ENCODE measurements at regions of chr16 and their contacts with region 1.

Region 1: GRCh38 chr16:89972244-89973234 is 24.0 kb downstream of the DEF8 start:
- DNase-seq: peak; percentile 91 to 97 (median 92)
- ATAC-seq: peak; percentile 84 to 96 (median 94)
- H3K4me3 ChIP-seq: peak overlapping the region; percentile 72 to 99 (median 80)
- H3K27ac ChIP-seq: peak overlapping the region; percentile 84 to 99 (median 96)
- H3K4me1 ChIP-seq: peaks cover 0 to 47% (median 28%) of the 10 kb centered on the region in 12 donors
- H3K27me3 ChIP-seq: no peaks in the 10 kb centered on the region
- CTCF ChIP-seq: peak in 3 of 12 donors; percentile 9 to 32 (median 27)
- POLR2A ChIP-seq: peak in 1 of 2 donors; percentile 85

Region 2: GRCh38 chr16:89873972-89874689 is 98.4 kb before region 1 on chr16:
- intact Hi-C with region 1: loop called in 1 of 10 experiments (anchors 10 kb)
- DNase-seq: peak; percentile 95 to 98 (median 96)
- ATAC-seq: peak; percentile 86 to 94 (median 92)
- H3K4me3 ChIP-seq: peak overlapping the region; percentile 61 to 98 (median 84)
- H3K27ac ChIP-seq: peak overlapping the region; percentile 91 to 100 (median 99)
- H3K4me1 ChIP-seq: peaks cover 0 to 24% (median 16%) of the 10 kb centered on the region in 12 donors
- H3K27me3 ChIP-seq: no peaks in the 10 kb centered on the region
- CTCF ChIP-seq: no peak
- POLR2A ChIP-seq: no peak

Region 3: GRCh38 chr16:89922884-89923690 is 49.5 kb before region 1 on chr16 and contains the start of gene TUBB3:
- intact Hi-C with region 1: loop called in 1 of 10 experiments (anchors 2 kb)
- DNase-seq: peak; percentile 72 to 90 (median 81)
- ATAC-seq: peak in 3 of 4 donors; percentile 36 to 54 (median 54)
- H3K4me3 ChIP-seq: peak within 1 kb of the TSS; percentile 58 to 80 (median 72)
- H3K27ac ChIP-seq: peak within 1 kb of the TSS; percentile 70 to 96 (median 88)
- H3K4me1 ChIP-seq: peaks cover 13 to 73% (median 40%) of the 10 kb centered on the region in 12 donors
- H3K27me3 ChIP-seq: peaks cover 0 to 43% (median 16%) of the 10 kb centered on the region in 9 donors
- CTCF ChIP-seq: no peak
- POLR2A ChIP-seq: peak; percentile 9 to 91
- total RNA-seq, gene TUBB3: 1.2 to 18.1 (median 4.1) TPM

Region 4: GRCh38 chr16:90022209-90023064 is 49.9 kb after region 1 on chr16:
- intact Hi-C with region 1: loop called in 1 of 10 experiments (anchors 5 kb)
- DNase-seq: peak; percentile 94 to 97 (median 94)
- ATAC-seq: peak; percentile 86 to 95 (median 90)
- H3K4me3 ChIP-seq: peak overlapping the region; percentile 55 to 95 (median 82)
- H3K27ac ChIP-seq: peak overlapping the region in 11 of 12 donors; percentile 47 to 86 (median 70)
- H3K4me1 ChIP-seq: peaks cover 0 to 51% (median 35%) of the 10 kb centered on the region in 12 donors
- H3K27me3 ChIP-seq: peaks cover 0 to 12% (median 0%) of the 10 kb centered on the region in 9 donors
- CTCF ChIP-seq: no peak
- POLR2A ChIP-seq: peak in 1 of 2 donors; percentile 27

Measured in heart left ventricle (tissue), 16 donors.